OCI-LY7 (cell line): ENCODE measurements at regions of chr9 and their contacts with region 1.

Region 1: GRCh38 chr9:91177661-91178280 is 183.9 kb downstream of the AUH start:
- DNase-seq: no peak
- H3K4me3 ChIP-seq: no peak overlapping the region
- H3K27ac ChIP-seq: no peak overlapping the region
- H3K4me1 ChIP-seq: peaks cover 40% of the 10 kb centered on the region
- CTCF ChIP-seq: no peak

Region 2: DNA sequence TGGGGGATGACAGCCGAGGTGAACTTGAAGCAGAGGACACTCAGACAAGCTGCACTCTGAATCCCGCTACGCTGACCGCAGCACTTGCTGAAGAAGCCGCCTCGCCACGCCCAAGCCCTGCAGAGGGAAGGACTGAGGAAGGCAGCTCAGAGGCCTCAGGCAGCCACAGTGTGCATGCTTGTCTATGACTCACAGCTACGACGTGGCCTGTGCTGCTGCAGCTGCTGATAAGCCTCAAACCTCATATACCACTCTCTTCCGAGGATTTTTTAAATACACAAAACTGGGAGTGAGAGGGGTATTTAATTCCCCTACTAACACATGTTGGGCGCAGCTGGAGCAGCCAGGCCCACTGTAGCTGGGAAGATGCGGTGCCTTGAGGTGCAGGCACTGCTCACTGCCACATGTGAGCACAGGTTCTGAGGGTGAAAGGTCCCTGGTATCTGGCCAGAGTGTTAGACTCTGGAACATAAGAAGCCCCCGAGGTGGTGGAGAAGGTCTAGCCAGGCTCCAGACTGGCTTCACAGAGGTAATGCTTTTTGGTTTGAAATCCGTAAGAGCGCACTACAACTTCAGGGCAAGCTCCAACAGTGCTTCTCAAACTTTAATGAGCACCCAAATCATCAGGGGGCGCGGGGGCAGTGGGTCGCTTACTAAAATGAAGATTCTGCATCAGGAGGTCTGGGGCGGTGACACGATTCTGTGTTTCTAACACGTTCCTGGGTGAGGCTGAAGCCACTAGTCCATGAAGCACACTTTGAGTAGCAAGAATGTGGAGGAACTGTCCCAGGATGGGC is 12.8 kb before region 1 on chr9:
- CTCF ChIA-PET with region 1: no interaction called
- POLR2A ChIA-PET with region 1: interaction called, 12 read pairs
- intact Hi-C with region 1: no loop called
- DNase-seq: no peak
- H3K4me3 ChIP-seq: no peak overlapping the region
- H3K27ac ChIP-seq: no peak overlapping the region
- H3K4me1 ChIP-seq: peaks cover 22% of the 10 kb centered on the region
- CTCF ChIP-seq: no peak

Region 3: GRCh38 chr9:91966503-91966902 is 788.7 kb after region 1 on chr9:
- CTCF ChIA-PET with region 1: no interaction called
- POLR2A ChIA-PET with region 1: no interaction called
- intact Hi-C with region 1: no loop called
- DNase-seq: no peak
- H3K4me3 ChIP-seq: no peak overlapping the region
- H3K27ac ChIP-seq: no peak overlapping the region
- H3K4me1 ChIP-seq: no peaks in the 10 kb centered on the region
- CTCF ChIP-seq: no peak